Activated T-helper 1 cell treated with anti-CD3 and anti-CD28 coated beads, Interleukin-12 subunit alpha, Interleukin-12 subunit beta, Interleukin-2, Interleukin-4 antibody, amounts not matched to agents 30 ng/mL and 10 ng/mL and 1 ng/mL, durations not matched to agents 14 hours and 24 hours and 36 hours (primary cell): ENCODE measurements at regions of chr22 and their contacts with region 1.

Region 1: GRCh38 chr22:41873391-41873790 is 40.5 kb downstream of the SREBF2 start:
- DNase-seq: peak; percentile 10
- H3K4me3 Mint-ChIP-seq: peak overlapping the region; percentile 76
- H3K27ac Mint-ChIP-seq: peak overlapping the region; percentile 82
- H3K4me1 Mint-ChIP-seq: peaks cover 67% of the 10 kb centered on the region
- H3K27me3 Mint-ChIP-seq: no peaks in the 10 kb centered on the region

Region 2: DNA sequence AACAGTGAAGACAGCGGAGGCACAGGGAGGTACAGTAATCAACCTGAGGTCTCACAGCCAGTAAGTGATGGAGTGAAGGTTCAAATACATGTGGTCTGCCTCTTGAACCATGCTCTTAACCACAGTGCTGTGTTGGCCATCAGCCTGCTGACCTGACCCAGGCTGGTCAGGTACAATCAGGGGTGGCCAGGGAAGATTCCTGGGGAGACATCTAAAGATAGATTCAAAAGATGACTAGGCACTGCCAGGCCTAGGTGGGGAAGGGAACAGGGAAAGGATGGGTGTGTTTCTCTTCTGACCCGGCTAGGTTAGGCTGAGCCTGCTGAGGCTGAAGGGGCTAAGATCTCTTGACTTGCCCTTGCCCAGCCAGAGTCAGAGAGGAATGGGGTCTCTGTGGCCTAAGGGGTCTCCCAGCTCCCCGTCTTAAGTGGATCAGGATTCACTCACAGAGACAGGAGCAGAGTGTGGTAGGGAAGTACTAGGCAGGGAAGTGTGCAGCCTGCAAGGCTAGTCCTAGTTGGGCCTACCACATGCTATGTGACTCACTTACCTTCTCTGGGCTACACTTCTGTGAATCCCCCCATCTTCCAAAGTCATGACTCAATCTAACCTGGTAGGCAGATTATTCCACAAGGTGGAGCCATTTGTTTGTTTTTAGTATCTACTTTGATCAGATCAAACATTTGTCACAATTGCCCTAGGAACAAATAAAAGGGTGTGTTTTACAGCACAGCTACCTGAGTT is 50.9 kb before region 1 on chr22:
- intact Hi-C with region 1: loop called (anchors 1 kb)
- DNase-seq: peak; percentile 23
- H3K4me3 Mint-ChIP-seq: no peak overlapping the region
- H3K27ac Mint-ChIP-seq: peak overlapping the region; percentile 82
- H3K4me1 Mint-ChIP-seq: peaks cover 36% of the 10 kb centered on the region
- H3K27me3 Mint-ChIP-seq: no peaks in the 10 kb centered on the region

Region 3: DNA sequence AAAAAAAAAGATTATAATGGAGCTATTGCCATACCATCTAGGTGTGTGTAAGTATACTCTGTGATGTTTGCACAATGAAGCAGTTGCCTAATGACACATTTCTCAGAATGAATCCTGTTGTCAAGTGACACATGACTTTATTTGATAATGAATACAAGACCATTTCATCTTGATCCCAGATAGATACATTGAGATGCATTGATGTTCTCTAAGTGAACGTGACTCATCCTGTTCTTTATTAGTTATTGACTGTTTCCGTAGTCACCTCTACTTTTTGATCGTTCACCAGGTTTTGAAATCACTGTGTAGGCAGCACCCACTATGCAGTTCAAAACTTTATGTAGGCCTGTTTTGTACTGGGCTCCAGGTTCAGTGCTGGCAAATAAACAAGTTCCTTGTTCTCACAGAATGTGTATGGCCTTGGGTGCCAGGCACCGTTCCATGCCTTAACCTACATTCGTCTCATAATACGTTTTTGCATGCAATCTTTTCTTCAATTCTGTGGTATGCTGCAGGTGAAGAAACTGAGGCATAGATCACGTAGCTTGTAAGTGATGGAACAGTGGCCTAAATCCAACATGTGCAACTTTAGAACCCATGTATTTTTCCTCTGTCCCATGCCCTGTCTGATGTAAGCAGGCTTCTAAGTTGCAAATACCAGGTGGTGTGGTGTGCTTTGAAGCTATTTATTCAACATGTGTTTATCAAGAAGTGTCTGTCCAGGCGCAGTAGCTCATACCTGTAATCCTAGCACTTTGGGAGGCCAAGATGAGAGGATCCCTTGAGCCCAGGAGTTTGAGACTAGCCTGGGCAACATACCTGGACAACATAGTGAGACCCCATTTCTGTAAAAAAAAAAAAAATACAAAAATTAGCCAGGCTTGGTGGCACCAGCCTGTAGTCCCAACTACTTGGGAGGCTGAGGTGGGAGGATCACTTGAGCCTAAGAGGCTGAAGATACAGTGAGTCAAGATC is 30.1 kb before region 1 on chr22:
- intact Hi-C with region 1: loop called (anchors 1 kb)
- DNase-seq: no peak
- H3K4me3 Mint-ChIP-seq: peak overlapping the region; percentile 24
- H3K27ac Mint-ChIP-seq: peak overlapping the region; percentile 75
- H3K4me1 Mint-ChIP-seq: peaks cover 84% of the 10 kb centered on the region
- H3K27me3 Mint-ChIP-seq: no peaks in the 10 kb centered on the region

Region 4: DNA sequence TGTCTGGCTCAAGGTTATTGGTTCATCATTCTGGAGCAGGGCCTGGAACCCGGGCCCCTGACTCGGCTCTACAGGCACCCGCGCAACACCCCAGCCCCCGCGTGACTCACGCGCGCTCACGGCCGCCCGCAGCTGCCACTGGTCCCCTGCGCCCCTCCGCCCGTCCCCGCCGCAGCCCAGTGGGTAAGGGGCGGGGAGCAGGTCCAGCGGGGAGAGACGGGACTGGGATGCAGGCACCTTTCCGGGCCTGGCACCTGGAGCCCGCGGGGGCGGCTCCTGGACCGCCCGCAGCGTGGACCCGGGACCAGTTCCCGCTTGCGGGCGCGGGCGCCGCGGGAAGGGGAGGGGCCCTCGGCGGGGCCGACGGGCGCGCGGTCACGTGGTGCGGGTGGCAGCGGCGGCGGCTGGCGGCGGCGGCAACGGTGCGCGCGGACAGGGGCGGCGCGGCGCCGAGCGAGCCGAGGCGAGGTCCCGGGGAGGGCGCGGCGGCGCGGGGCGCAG is 103.1 kb after region 1 on chr22:
- intact Hi-C with region 1: no loop called
- DNase-seq: peak; percentile 62
- H3K4me3 Mint-ChIP-seq: peak overlapping the region; percentile 70
- H3K27ac Mint-ChIP-seq: peak overlapping the region; percentile 3
- H3K4me1 Mint-ChIP-seq: peaks cover 21% of the 10 kb centered on the region
- H3K27me3 Mint-ChIP-seq: peaks cover 32% of the 10 kb centered on the region